Heart right ventricle (tissue), 16 donors: ENCODE measurements at regions of chr10 and their contacts with region 1.

Region 1: DNA sequence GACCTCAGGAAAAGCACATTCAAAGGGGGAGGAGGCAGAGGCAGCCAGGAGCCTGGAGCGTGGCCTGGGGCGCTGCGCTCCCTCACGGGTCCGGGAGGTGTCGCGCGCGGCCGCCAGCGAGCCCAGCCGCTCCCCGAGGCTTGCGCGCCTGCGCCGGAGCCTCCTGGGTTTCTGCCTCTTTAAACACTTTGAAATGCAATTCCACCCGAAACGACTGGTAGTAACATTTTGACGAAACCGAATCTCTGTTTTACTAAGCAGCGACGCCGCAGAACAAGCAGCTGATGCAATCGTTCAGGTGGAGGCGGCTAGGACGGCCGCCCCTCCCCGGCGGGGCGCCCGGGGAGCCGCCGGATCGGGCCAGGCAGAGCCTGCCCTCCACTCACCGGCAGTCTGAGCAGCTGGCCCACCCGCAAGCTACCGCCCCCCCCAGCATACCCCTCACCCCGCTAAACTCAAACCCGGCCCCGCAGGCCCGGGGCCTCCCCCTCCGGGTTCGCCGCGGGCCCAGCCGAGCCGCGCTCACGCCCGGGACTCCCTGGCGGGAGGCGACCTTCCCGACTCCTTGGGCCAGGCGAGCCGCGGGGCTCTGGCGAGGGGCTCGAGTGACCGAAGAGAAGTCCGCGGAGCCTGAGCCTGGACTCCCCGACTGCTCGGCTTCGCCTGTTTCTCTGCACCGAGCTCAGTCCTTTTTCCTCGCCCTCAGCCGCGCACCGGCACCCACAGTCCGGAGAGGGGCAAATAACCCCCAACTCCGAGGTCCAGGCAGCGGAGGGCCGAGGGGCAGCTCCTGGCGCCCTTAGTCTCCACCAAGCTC is 3.2 kb downstream of the MKX start:
- DNase-seq: peak; percentile 61 to 75
- ATAC-seq: peak; percentile 86 to 95 (median 90)
- H3K4me3 ChIP-seq: peak overlapping the region; percentile 46 to 71 (median 63)
- H3K27ac ChIP-seq: peak overlapping the region in 5 of 10 donors; percentile 50 to 63 (median 59)
- H3K4me1 ChIP-seq: peaks cover 8 to 57% (median 47%) of the 10 kb centered on the region in 9 donors
- H3K27me3 ChIP-seq: peaks cover 41 to 91% (median 76%) of the 10 kb centered on the region in 7 donors
- CTCF ChIP-seq: peak; percentile 46 to 84 (median 78)

Region 2: DNA sequence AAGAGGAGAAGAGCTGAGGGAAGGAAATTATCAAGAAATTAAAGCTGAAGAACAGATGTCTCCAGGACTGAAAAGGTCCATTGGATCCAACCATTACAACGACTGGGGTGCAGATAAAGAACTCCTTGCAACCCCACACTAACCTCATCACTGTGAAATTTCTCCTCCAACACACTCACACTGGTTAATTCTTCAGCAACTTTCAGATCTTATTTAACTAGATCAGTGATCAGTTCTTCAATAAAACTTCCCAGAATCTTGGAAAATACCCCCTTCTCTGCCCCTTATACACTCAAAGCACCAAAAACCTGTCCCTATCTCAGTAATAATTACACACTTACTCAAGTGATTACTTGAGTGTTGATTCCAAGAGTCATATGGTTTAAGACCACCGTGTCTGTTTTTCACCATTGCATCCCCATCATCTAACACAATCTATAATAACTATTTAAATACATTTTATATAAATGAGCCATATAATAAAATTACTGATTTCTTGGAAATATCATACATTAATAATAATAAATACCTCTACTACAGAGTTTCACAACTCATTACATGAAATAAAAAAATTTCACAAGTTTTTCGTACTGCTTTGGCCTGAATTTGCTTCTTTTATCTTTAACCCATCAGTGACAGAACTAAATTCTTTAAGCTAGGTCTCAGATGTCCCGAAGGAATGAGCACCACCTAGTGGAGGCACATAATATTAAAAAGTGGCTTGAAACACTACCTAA is 436.8 kb after region 1 on chr10:
- intact Hi-C with region 1: loop called in 8 of 10 experiments (anchors 2 to 10 kb)
- DNase-seq: peak in 1 of 2 donors; percentile 21
- ATAC-seq: peak in 2 of 8 donors; percentile 56 to 61
- H3K4me3 ChIP-seq: no peak overlapping the region
- H3K27ac ChIP-seq: peak overlapping the region in 1 of 10 donors; percentile 2
- H3K4me1 ChIP-seq: peaks cover 0 to 21% (median 5%) of the 10 kb centered on the region in 9 donors
- H3K27me3 ChIP-seq: peaks cover 0 to 8% (median 0%) of the 10 kb centered on the region in 7 donors
- CTCF ChIP-seq: peak; percentile 58 to 83 (median 73)

Region 3: GRCh38 chr10:28188526-28188925 is 446.1 kb after region 1 on chr10:
- intact Hi-C with region 1: loop called in 3 of 10 experiments (anchors 5 kb)
- DNase-seq: no peak
- ATAC-seq: no peak
- H3K4me3 ChIP-seq: no peak overlapping the region
- H3K27ac ChIP-seq: no peak overlapping the region
- H3K4me1 ChIP-seq: no peaks in the 10 kb centered on the region
- H3K27me3 ChIP-seq: no peaks in the 10 kb centered on the region
- CTCF ChIP-seq: no peak

Region 4: GRCh38 chr10:28241741-28242399 is 499.5 kb after region 1 on chr10:
- intact Hi-C with region 1: loop called in 6 of 10 experiments (anchors 5 kb)
- DNase-seq: peak in 1 of 2 donors; percentile 28
- ATAC-seq: peak in 6 of 8 donors; percentile 56 to 81 (median 71)
- H3K4me3 ChIP-seq: no peak overlapping the region
- H3K27ac ChIP-seq: no peak overlapping the region
- H3K4me1 ChIP-seq: peaks cover 0 to 20% (median 0%) of the 10 kb centered on the region in 9 donors
- H3K27me3 ChIP-seq: no peaks in the 10 kb centered on the region
- CTCF ChIP-seq: peak; percentile 75 to 94 (median 91)

Region 5: DNA sequence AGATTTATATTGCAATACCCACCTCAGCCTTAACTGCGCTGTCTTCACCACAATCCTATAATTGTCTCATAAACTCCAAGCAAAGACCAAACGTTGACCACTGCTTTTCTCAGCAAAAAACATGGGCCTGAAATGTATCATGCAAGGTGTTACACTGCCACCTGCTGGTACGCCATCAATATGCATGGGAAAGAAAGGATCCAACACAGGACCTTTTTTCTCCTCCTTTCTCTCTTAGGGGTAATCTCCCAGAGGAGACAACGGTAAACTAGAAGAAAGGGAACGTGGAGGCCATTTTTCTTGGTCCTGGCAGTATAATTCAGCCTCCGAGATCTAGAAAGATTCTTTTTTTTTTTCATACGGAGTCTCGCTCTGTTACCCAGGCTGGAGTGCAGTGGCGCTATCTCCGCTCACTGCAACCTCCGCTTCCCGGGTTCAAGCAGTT is 639.5 kb after region 1 on chr10:
- intact Hi-C with region 1: loop called in 2 of 10 experiments (anchors 10 kb)
- DNase-seq: peak; percentile 47 to 79
- ATAC-seq: peak; percentile 77 to 93 (median 86)
- H3K4me3 ChIP-seq: no peak overlapping the region
- H3K27ac ChIP-seq: no peak overlapping the region
- H3K4me1 ChIP-seq: peaks cover 0 to 22% (median 0%) of the 10 kb centered on the region in 9 donors
- H3K27me3 ChIP-seq: peaks cover 0 to 8% (median 3%) of the 10 kb centered on the region in 7 donors
- CTCF ChIP-seq: peak; percentile 77 to 95 (median 92)

Region 6: GRCh38 chr10:28393966-28394568 is 651.7 kb after region 1 on chr10:
- intact Hi-C with region 1: loop called in 3 of 10 experiments (anchors 10 kb)
- DNase-seq: peak; percentile 30 to 45
- ATAC-seq: peak; percentile 61 to 90 (median 79)
- H3K4me3 ChIP-seq: no peak overlapping the region
- H3K27ac ChIP-seq: no peak overlapping the region
- H3K4me1 ChIP-seq: peaks cover 0 to 7% (median 0%) of the 10 kb centered on the region in 9 donors
- H3K27me3 ChIP-seq: peaks cover 0 to 3% (median 0%) of the 10 kb centered on the region in 7 donors
- CTCF ChIP-seq: peak; percentile 72 to 95 (median 91)